ENCODE measurements at regions of chr15 and their contacts with region 1.

Region 1: DNA sequence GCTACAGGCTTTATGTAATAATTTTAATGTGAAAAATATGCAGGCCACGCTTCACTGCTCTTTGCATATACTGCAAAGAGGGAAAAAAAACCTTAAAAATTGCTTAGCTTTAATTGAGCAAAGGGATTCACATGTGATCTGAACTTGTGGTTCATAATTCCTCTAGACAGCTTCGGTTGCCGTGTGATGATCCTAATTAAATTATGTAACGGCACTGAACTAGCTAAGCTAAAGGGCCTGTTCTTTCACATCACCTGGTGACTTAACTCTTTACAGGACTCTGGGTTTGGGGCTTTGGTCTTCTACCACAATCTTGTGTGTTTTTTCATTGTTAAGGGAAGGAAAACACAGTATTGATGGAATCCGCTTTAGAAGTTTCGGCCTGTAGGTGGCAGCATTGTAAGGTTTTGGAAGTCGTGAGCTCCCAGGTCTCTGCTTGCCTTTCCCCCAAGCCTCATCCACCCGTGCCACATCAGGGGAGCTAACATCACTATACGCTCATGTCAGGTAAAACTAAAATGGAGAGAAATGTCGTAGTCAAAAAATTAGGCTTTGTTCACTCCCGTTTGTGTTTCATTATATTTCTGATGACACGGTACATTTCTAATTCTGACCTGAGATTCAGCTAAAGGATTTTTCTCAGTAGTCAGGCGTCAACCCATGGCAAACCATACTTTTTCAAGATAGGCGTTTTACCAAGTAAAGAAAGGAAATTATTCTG is 205.6 kb upstream of the DPH6 start:
- DNase-seq: peak; percentile 78
- ATAC-seq: peak; percentile 91
- H3K4me3 ChIP-seq: no peak overlapping the region
- H3K27ac ChIP-seq: no peak overlapping the region
- H3K4me1 ChIP-seq: peaks cover 2% of the 10 kb centered on the region; the same call in 1 of the 2 replicates
- H3K27me3 ChIP-seq: no peaks in the 10 kb centered on the region
- CTCF ChIP-seq: peak; percentile 71
- POLR2A ChIP-seq: no peak
- RAD21 ChIP-seq: peak; percentile 79

Region 2: GRCh38 chr15:35545824-35546510 is 205.6 kb before region 1 on chr15 and contains the start of gene DPH6:
- CTCF ChIA-PET with region 1: no interaction called
- POLR2A ChIA-PET with region 1: no interaction called
- dilution Hi-C with region 1: no loop called
- in situ Hi-C with region 1: no loop called
- intact Hi-C with region 1: loop called (anchors 5 kb)
- DNase-seq: peak; percentile 79
- ATAC-seq: peak; percentile 94
- H3K4me3 ChIP-seq: peak within 1 kb of the TSS; percentile 79
- H3K27ac ChIP-seq: peak within 1 kb of the TSS; percentile 96
- H3K4me1 ChIP-seq: peaks cover 2% of the 10 kb centered on the region; the same call in 1 of the 2 replicates
- H3K27me3 ChIP-seq: no peaks in the 10 kb centered on the region
- CTCF ChIP-seq: no peak
- POLR2A ChIP-seq: peak; percentile 79
- RAD21 ChIP-seq: no peak
- total RNA-seq, gene DPH6: 8.1 and 21.4 TPM in 2 replicates

Region 3: GRCh38 chr15:36039996-36040572 is 288.5 kb after region 1 on chr15:
- CTCF ChIA-PET with region 1: no interaction called
- POLR2A ChIA-PET with region 1: no interaction called
- dilution Hi-C with region 1: no loop called
- in situ Hi-C with region 1: no loop called
- intact Hi-C with region 1: no loop called
- DNase-seq: no peak
- ATAC-seq: no peak
- H3K4me3 ChIP-seq: no peak overlapping the region
- H3K27ac ChIP-seq: no peak overlapping the region
- H3K4me1 ChIP-seq: no peaks in the 10 kb centered on the region
- H3K27me3 ChIP-seq: no peaks in the 10 kb centered on the region
- CTCF ChIP-seq: no peak
- POLR2A ChIP-seq: no peak
- RAD21 ChIP-seq: no peak

Region 4: GRCh38 chr15:36133742-36134141 is 382.2 kb after region 1 on chr15:
- CTCF ChIA-PET with region 1: interaction called, 3 read pairs
- POLR2A ChIA-PET with region 1: no interaction called
- dilution Hi-C with region 1: no loop called
- in situ Hi-C with region 1: no loop called
- intact Hi-C with region 1: loop called (anchors 10 kb)
- DNase-seq: peak; percentile 53
- ATAC-seq: peak; percentile 70
- H3K4me3 ChIP-seq: no peak overlapping the region
- H3K27ac ChIP-seq: 0 out of 2 replicates have a peak overlapping the region, but pooled peaks have one; percentile 2
- H3K4me1 ChIP-seq: peaks cover 8% of the 10 kb centered on the region
- H3K27me3 ChIP-seq: no peaks in the 10 kb centered on the region
- CTCF ChIP-seq: no peak
- POLR2A ChIP-seq: no peak
- RAD21 ChIP-seq: no peak

Region 5: DNA sequence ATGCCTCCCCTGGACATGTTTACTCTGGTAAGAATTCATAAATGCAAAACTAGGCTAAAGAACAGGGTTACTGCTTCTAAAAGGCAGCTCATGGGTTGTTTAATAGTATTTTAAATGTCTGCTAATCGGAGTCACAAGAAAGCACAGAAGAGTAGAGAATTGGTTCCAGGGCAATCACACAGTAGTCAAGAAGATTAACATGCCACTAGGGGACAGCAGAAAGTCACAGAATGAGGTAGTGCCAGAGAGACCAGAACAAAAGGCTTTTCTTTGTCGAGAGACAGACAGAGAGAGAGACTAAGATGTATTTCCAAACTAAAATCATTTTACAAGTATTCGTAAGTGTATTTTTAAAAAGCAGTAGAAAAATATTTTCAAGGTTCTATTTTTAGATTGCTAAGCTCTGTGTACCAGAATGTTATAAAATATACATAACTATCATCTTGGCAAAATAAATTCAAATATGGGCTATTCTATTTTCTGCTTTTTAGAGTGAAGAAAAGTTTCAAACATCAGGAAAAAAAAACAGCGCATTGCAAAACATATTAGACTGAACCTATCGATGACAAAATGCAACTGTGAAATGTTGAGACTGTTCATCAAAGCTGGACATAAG is 749.6 kb after region 1 on chr15:
- CTCF ChIA-PET with region 1: interaction called, 4 read pairs
- POLR2A ChIA-PET with region 1: no interaction called
- dilution Hi-C with region 1: no loop called
- in situ Hi-C with region 1: no loop called
- intact Hi-C with region 1: loop called (anchors 5 kb)
- DNase-seq: peak; percentile 79
- ATAC-seq: peak; percentile 89
- H3K4me3 ChIP-seq: no peak overlapping the region
- H3K27ac ChIP-seq: no peak overlapping the region
- H3K4me1 ChIP-seq: peaks cover 5% of the 10 kb centered on the region
- H3K27me3 ChIP-seq: no peaks in the 10 kb centered on the region
- CTCF ChIP-seq: peak; percentile 79
- POLR2A ChIP-seq: peak; percentile 28; the same call in 1 of the 2 replicates
- RAD21 ChIP-seq: peak; percentile 90

Region 6: GRCh38 chr15:36883713-36884517 is 1132.3 kb after region 1 on chr15:
- CTCF ChIA-PET with region 1: no interaction called
- POLR2A ChIA-PET with region 1: no interaction called
- dilution Hi-C with region 1: no loop called
- in situ Hi-C with region 1: no loop called
- intact Hi-C with region 1: loop called (anchors 10 kb)
- DNase-seq: peak; percentile 86
- ATAC-seq: peak; percentile 90
- H3K4me3 ChIP-seq: peak overlapping the region; percentile 35; the same call in 1 of the 2 replicates
- H3K27ac ChIP-seq: no peak overlapping the region
- H3K4me1 ChIP-seq: peaks cover 3% of the 10 kb centered on the region; the same call in 1 of the 2 replicates
- H3K27me3 ChIP-seq: peaks cover 24% of the 10 kb centered on the region
- CTCF ChIP-seq: peak; percentile 88
- POLR2A ChIP-seq: no peak
- RAD21 ChIP-seq: peak; percentile 91

Region 7: DNA sequence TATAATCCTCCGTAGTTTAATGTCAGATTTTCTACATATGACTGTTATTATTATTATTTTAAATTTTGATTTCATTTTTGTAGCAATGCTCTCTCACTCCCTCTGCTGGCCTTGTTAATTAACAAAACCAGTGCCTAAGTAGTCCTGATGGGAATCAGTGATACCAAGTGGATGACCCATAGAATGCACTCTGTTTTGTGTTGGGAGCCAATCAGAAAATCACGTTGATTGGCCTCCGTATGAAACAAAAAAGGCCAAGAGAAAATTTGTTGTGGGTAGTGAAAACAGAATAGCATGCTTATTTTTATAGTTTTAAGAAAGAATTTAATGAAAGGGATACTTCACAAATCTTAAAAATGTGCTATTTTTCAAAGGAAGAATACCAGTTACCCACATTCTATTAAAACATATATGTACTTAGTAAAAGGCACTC is 1383.1 kb after region 1 on chr15:
- CTCF ChIA-PET with region 1: interaction called, 4 read pairs
- POLR2A ChIA-PET with region 1: no interaction called
- dilution Hi-C with region 1: no loop called
- in situ Hi-C with region 1: loop called (anchors 10 kb)
- intact Hi-C with region 1: loop called (anchors 10 kb)
- DNase-seq: peak; percentile 58
- ATAC-seq: peak; percentile 68
- H3K4me3 ChIP-seq: no peak overlapping the region
- H3K27ac ChIP-seq: no peak overlapping the region
- H3K4me1 ChIP-seq: peaks cover 1% of the 10 kb centered on the region; the same call in 1 of the 2 replicates
- H3K27me3 ChIP-seq: no peaks in the 10 kb centered on the region
- CTCF ChIP-seq: peak; percentile 80
- POLR2A ChIP-seq: no peak
- RAD21 ChIP-seq: peak; percentile 53

Measured in IMR-90 (cell line).